Activated CD4-positive, alpha-beta T cell treated with anti-CD3 and anti-CD28 coated beads for 36 hours (primary cell): ENCODE measurements at regions of chr20 and their contacts with region 1.

Region 1: GRCh38 chr20:51404298-51405060 is 138.0 kb downstream of the NFATC2 start:
- DNase-seq: peak; percentile 94
- ATAC-seq: peak; percentile 81
- H3K4me3 Mint-ChIP-seq: peak overlapping the region; percentile 1
- H3K27ac Mint-ChIP-seq: peak overlapping the region; percentile 96
- H3K4me1 Mint-ChIP-seq: peaks cover 89% of the 10 kb centered on the region
- H3K27me3 Mint-ChIP-seq: no peaks in the 10 kb centered on the region

Region 2: DNA sequence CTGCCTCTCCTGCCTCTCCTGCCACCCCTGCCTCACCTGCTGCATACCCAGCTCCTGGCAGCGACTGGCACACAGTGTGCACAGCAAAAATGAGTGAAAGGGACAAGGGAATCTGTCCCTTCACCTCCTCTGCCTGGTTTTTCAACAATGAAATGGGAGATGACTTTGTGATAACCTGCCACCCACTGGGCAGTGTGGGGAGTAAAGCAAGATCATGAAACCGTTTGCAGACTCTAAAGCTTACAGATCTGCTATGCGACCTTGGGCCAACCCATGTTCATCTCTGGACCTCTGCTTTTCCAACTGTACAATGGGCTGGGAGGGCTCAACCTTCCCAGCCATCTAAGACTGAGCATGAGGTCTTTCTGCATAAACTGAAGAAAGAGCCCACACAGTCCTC is 794.3 kb before region 1 on chr20:
- CTCF ChIA-PET with region 1: no interaction called
- POLR2A ChIA-PET with region 1: no interaction called
- intact Hi-C with region 1: no loop called
- DNase-seq: no peak
- ATAC-seq: no peak
- H3K4me3 Mint-ChIP-seq: no peak overlapping the region
- H3K27ac Mint-ChIP-seq: no peak overlapping the region
- H3K4me1 Mint-ChIP-seq: no peaks in the 10 kb centered on the region
- H3K27me3 Mint-ChIP-seq: no peaks in the 10 kb centered on the region

Region 3: GRCh38 chr20:51029963-51030920 is 374.2 kb before region 1 on chr20:
- CTCF ChIA-PET with region 1: no interaction called
- POLR2A ChIA-PET with region 1: no interaction called
- intact Hi-C with region 1: no loop called
- DNase-seq: no peak
- ATAC-seq: no peak
- H3K4me3 Mint-ChIP-seq: no peak overlapping the region
- H3K27ac Mint-ChIP-seq: no peak overlapping the region
- H3K4me1 Mint-ChIP-seq: peaks cover 7% of the 10 kb centered on the region
- H3K27me3 Mint-ChIP-seq: peaks cover 64% of the 10 kb centered on the region

Region 4: GRCh38 chr20:51385646-51386530 is 18.6 kb before region 1 on chr20:
- CTCF ChIA-PET with region 1: interaction called, 7 read pairs
- POLR2A ChIA-PET with region 1: interaction called, 7 read pairs
- intact Hi-C with region 1: loop called (anchors 1 kb)
- DNase-seq: peak; percentile 48
- ATAC-seq: no peak
- H3K4me3 Mint-ChIP-seq: no peak overlapping the region
- H3K27ac Mint-ChIP-seq: no peak overlapping the region
- H3K4me1 Mint-ChIP-seq: peaks cover 64% of the 10 kb centered on the region
- H3K27me3 Mint-ChIP-seq: no peaks in the 10 kb centered on the region

Region 5: DNA sequence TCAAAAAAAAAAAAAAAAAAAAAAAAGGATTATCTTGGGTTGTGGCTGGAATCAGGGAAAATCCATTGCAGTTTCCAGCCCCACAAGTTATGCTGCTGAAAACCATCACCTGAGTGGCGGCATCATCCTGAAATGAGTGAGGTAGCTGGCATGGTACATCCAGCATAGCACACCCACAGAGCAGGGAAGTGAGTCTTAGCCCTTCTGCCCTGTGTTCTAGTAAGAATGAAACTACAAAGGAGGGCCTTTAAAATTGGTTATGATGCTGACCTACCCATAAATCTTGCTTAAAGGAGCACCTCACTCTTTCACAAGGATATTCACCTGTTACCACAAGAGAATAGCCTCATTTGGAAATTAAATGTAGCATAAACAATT is 18.8 kb after region 1 on chr20:
- CTCF ChIA-PET with region 1: interaction called, 6 read pairs
- POLR2A ChIA-PET with region 1: interaction called, 11 read pairs
- intact Hi-C with region 1: loop called (anchors 1 kb)
- DNase-seq: peak; percentile 71
- ATAC-seq: peak; percentile 77
- H3K4me3 Mint-ChIP-seq: no peak overlapping the region
- H3K27ac Mint-ChIP-seq: peak overlapping the region; percentile 92
- H3K4me1 Mint-ChIP-seq: peaks cover 84% of the 10 kb centered on the region
- H3K27me3 Mint-ChIP-seq: no peaks in the 10 kb centered on the region

Region 6: DNA sequence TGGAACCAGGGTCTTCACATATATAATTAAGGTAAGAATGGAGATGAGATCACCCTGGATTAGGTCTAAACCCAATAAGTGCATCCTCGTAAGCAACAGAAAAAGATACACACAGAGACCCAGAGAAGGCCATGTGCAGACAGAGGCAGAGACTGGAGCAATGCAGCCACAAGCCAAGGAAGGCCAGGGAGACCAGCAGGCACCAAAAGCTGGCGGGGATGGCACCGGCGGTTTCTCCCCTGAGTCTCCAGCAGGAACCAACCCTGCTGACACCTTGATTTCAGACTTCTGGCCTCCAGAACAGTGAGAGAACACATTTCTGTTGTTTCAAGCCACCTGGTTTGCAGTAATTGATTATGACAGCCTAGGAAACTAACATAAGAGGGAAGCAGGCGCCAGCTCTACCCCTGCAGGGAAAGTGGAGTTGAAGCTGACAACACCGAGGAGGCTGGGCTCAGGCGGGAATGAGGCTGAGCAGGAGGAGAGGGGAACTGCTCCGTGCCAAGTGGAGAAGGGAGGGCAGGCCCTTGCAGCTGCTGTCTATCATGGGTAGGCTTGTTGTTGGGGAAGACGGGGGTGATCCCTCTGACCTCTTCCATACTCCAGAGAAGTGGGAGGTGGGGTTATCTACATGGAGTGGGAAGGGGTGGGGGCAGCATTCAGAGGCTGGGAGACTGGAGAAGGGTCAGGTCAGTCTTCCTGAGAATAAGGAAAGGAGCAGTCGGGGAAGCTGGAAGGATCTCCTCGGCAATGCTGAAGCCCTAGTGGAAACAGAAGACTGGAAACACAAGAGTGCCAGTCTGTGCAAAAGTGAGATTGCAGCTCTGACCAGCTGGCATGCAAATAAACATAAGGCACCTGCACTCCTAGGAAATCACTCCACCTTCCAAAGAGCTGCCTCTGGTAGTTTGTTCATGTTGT is 65.4 kb after region 1 on chr20:
- CTCF ChIA-PET with region 1: interaction called, 3 read pairs
- POLR2A ChIA-PET with region 1: interaction called, 3 read pairs
- intact Hi-C with region 1: loop called in 1 of 2 experiments (anchors 2 kb)
- DNase-seq: peak; percentile 3
- ATAC-seq: no peak
- H3K4me3 Mint-ChIP-seq: no peak overlapping the region
- H3K27ac Mint-ChIP-seq: peak overlapping the region; percentile 95
- H3K4me1 Mint-ChIP-seq: peaks cover 57% of the 10 kb centered on the region
- H3K27me3 Mint-ChIP-seq: no peaks in the 10 kb centered on the region

Region 7: DNA sequence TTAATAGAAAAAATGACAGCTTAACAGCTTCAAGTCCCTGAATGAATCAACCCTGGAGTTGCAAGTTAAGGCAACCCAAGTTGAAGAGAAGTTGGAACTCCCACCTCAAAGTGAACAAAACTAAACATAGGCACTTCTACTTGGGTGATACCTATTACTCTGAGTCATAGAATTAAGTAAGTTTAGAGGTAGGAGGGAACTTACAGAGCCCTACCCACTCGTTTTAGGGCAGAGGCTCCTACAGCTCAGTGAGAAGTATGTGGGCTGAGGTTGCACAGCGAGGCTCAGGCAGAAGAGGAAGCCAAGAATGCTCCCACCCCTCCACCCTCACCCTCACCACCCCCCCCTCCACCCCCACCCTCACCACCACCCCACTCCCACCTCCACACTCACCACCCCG is 95.8 kb after region 1 on chr20:
- CTCF ChIA-PET with region 1: interaction called, 3 read pairs
- POLR2A ChIA-PET with region 1: interaction called, 10 read pairs
- intact Hi-C with region 1: loop called (anchors 1 kb)
- DNase-seq: peak; percentile 74
- ATAC-seq: peak; percentile 72
- H3K4me3 Mint-ChIP-seq: no peak overlapping the region
- H3K27ac Mint-ChIP-seq: peak overlapping the region; percentile 91
- H3K4me1 Mint-ChIP-seq: peaks cover 82% of the 10 kb centered on the region
- H3K27me3 Mint-ChIP-seq: no peaks in the 10 kb centered on the region

Region 8: DNA sequence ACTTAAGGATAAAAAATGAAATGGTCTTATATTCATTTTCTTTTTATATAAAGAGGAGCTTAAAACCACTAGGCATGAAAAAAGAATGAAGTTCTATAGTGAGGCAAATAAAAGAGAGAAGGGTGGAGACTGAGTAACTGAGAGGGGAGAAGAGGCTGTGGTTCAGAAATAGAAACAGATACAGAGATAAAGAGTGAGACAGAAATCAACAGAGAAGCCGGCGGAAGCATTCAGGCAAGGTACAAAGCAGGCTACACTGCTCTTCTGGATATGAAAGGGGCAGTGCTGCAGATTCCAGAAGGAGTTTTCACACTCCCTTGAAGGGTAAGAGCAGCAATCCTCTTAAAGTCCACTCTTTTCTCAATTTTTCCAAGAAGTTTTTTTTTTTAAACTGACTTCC is 108.2 kb after region 1 on chr20:
- CTCF ChIA-PET with region 1: no interaction called
- POLR2A ChIA-PET with region 1: interaction called, 4 read pairs
- intact Hi-C with region 1: loop called in 1 of 2 experiments (anchors 1 kb)
- DNase-seq: peak; percentile 52
- ATAC-seq: peak; percentile 92
- H3K4me3 Mint-ChIP-seq: peak overlapping the region; percentile 20
- H3K27ac Mint-ChIP-seq: peak overlapping the region; percentile 89
- H3K4me1 Mint-ChIP-seq: peaks cover 78% of the 10 kb centered on the region
- H3K27me3 Mint-ChIP-seq: no peaks in the 10 kb centered on the region

Region 9: DNA sequence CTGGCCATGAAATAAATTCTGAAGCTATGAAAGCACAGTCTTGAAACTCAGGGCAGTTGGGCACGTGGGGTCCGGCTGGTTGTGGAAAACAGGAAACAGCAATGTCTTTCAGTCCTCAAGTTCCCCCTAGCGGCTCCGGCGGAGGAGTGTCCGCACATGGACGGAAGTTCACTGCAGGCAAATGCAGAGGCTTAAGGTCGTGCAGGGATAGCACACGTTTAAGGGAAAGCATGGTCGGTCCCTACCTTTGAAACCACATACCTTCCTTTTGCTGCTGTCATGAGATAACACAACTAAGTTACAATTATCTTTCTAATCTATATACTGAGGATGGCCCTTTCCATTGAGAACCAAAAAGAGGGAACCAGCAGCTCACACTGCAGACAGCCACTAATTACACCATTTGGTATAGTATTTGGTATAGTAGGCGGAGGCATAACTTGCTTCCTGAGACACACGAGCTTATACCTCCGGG is 190.6 kb after region 1 on chr20:
- CTCF ChIA-PET with region 1: interaction called, 10 read pairs
- POLR2A ChIA-PET with region 1: interaction called, 4 read pairs
- intact Hi-C with region 1: no loop called
- DNase-seq: peak; percentile 89
- ATAC-seq: peak; percentile 93
- H3K4me3 Mint-ChIP-seq: no peak overlapping the region
- H3K27ac Mint-ChIP-seq: peak overlapping the region; percentile 72
- H3K4me1 Mint-ChIP-seq: peaks cover 54% of the 10 kb centered on the region
- H3K27me3 Mint-ChIP-seq: no peaks in the 10 kb centered on the region